Calu3 (cell line): ENCODE measurements at regions of chr19 and their contacts with region 1.

Region 1: DNA sequence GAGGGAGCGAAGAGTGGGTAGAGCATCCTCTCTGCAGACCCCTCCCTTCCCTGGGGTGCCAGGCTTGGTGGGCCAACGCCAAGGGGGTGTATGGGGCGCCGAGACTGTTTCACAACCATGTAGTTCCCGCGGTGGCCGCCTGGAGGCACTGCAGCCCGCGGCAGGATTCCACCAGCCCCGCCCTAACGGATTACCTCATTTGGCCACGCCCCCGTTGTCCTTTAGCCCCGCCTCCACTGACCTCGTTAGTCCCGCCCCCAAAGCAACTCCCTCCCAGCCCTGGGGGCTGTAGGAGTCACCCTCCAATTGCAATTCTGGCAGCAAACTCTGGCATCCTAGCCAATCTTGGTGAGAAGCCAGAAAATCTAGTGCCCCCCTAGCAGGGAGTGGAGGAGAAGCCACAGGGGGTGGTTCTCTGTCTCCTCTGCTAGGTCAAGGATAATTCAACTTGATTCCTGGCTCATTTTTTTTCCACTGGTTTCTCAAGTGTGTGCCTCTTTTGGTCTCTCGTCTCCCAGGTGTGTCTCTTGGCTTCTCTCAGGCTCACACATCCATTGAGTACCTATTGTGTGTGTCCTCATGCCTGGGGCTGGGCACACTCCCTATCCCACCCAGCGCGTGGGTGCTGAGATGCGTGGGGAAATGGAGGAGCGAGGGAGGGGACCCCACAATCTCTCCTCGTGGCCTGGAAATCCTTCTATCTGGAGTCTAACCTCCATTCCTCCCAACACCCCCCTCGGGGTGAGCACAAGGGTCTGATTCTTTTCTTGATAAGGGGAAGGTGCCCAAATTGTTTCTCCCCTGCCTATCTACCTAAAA is 2.0 kb downstream of the OLFM2 start:
- DNase-seq: peak; percentile 79
- H3K4me3 Mint-ChIP-seq: no peak overlapping the region
- H3K27ac Mint-ChIP-seq: no peak overlapping the region
- H3K4me1 Mint-ChIP-seq: peaks cover 9% of the 10 kb centered on the region
- H3K27me3 Mint-ChIP-seq: peaks cover 30% of the 10 kb centered on the region
- CTCF ChIP-seq: peak; percentile 84

Region 2: DNA sequence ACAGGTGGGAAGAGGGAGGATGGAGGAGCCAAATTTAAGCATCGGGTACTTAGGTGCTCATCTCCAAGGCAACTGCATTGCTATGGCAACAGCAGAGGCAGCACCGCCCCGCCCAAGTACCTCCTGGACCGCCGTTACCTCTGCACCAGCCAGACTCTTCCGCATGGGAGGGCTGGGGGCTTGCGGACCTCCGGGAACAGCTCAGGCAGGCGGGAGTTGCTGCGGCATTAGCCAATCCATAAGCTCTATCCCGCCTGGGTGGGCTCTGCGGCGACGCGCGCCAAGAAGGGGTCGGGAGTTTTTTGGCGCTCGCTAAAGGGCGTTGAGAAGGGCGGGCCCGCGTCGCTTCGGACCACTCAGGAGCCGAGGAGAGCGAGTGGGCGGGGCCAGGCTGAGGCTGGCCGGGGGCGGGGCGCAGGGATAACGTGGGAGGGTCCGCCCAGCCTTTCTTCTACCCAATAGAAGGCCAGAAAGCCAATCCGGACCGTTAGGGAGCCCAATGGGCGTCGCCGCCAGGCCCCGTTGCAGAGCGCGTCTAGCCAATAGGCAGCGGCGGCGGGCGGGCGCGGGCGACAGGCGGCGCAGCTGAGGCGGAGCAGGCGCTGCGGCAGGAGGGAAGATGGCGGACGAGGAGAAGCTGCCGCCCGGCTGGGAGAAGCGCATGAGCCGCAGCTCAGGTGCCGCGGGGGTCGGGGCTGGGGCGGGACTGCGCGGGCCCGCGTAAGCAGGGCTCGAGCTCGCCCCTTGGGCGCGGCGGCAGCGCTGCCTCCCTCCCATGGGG is 99.4 kb before region 1 on chr19 and contains the start of gene PIN1:
- CTCF ChIA-PET with region 1: no interaction called
- intact Hi-C with region 1: no loop called
- DNase-seq: peak; percentile 97
- H3K4me3 Mint-ChIP-seq: peak within 1 kb of the TSS; percentile 82
- H3K27ac Mint-ChIP-seq: peak within 1 kb of the TSS; percentile 63
- H3K4me1 Mint-ChIP-seq: peaks cover 6% of the 10 kb centered on the region
- H3K27me3 Mint-ChIP-seq: no peaks in the 10 kb centered on the region
- CTCF ChIP-seq: no peak
- total RNA-seq, gene PIN1: 49.5 and 51.0 TPM in 2 replicates

Region 3: GRCh38 chr19:10027158-10027693 is 92.9 kb after region 1 on chr19:
- CTCF ChIA-PET with region 1: interaction called, 6 read pairs
- intact Hi-C with region 1: loop called (anchors 2 kb)
- DNase-seq: no peak
- H3K4me3 Mint-ChIP-seq: peak overlapping the region; percentile 14
- H3K27ac Mint-ChIP-seq: no peak overlapping the region
- H3K4me1 Mint-ChIP-seq: peaks cover 4% of the 10 kb centered on the region
- H3K27me3 Mint-ChIP-seq: peaks cover 20% of the 10 kb centered on the region
- CTCF ChIP-seq: no peak

Region 4: GRCh38 chr19:10251792-10252694 is 317.7 kb after region 1 on chr19 and contains the start of gene MRPL4:
- CTCF ChIA-PET with region 1: interaction called, 9 read pairs
- intact Hi-C with region 1: loop called (anchors 2 kb)
- DNase-seq: peak; percentile 88
- H3K4me3 Mint-ChIP-seq: peak within 1 kb of the TSS; percentile 94
- H3K27ac Mint-ChIP-seq: peak within 1 kb of the TSS; percentile 89
- H3K4me1 Mint-ChIP-seq: no peaks in the 10 kb centered on the region
- H3K27me3 Mint-ChIP-seq: no peaks in the 10 kb centered on the region
- CTCF ChIP-seq: no peak
- total RNA-seq, gene MRPL4: 59.2 and 60.4 TPM in 2 replicates

Region 5: DNA sequence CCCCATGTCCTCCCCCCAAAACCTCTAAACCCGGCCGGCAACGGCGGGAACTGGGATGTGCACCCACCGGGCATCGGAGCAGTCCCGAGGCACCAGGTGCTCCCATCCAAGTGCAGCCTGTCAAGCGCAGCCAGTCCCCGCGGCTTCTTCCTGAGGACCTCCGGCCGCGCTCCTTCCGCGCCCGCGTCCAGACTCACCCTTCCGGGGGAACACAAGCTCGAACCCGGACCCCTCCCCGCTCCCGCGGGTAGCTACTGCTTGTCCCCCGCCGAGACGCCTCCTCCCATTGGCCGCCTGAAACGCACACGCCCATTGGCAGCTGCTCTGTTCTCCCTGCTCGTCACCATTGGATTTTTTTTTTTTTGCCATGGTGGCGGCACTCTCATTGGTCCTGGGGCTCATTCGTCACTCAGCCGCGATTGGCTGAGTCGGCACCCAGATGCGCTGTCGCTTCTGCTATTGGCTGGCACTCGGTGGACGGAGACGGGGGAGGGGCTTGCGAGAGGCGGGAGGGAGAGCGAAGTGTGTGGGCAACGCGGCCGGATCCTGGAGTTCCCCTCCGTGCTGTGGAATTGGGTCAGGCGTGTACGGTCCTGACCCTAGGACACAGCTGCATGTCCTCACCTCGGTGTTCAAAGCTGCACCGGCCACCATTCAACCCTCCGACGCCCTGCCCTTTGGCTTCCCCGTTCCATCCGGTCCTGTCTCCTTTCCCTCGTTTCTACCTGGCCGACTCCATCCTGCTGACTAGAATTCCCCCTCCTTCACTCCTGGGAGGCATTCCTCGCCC is 446.2 kb after region 1 on chr19 and contains the start of gene TYK2:
- CTCF ChIA-PET with region 1: no interaction called
- intact Hi-C with region 1: loop called (anchors 10 kb)
- DNase-seq: peak; percentile 92
- H3K4me3 Mint-ChIP-seq: peak within 1 kb of the TSS; percentile 94
- H3K27ac Mint-ChIP-seq: peak within 1 kb of the TSS; percentile 98
- H3K4me1 Mint-ChIP-seq: peaks cover 12% of the 10 kb centered on the region
- H3K27me3 Mint-ChIP-seq: no peaks in the 10 kb centered on the region
- CTCF ChIP-seq: no peak
- total RNA-seq, gene TYK2: 120 and 130 TPM in 2 replicates